ENCODE measurements at regions of chr11 and their contacts with region 1.

Region 1: GRCh38 chr11:111441443-111441842 is 62.4 kb upstream of the POU2AF1 start:
- DNase-seq: peak; percentile 42
- H3K4me3 Mint-ChIP-seq: no peak overlapping the region
- H3K27ac Mint-ChIP-seq: peak overlapping the region; percentile 46
- H3K4me1 Mint-ChIP-seq: peaks cover 15% of the 10 kb centered on the region
- H3K27me3 Mint-ChIP-seq: peaks cover 11% of the 10 kb centered on the region
- CTCF ChIP-seq: no peak

Region 2: GRCh38 chr11:110463153-110463552 is 978.3 kb before region 1 on chr11:
- CTCF ChIA-PET with region 1: no interaction called
- POLR2A ChIA-PET with region 1: no interaction called
- intact Hi-C with region 1: loop called (anchors 10 kb)
- DNase-seq: peak; percentile 52
- H3K4me3 Mint-ChIP-seq: no peak overlapping the region
- H3K27ac Mint-ChIP-seq: no peak overlapping the region
- H3K4me1 Mint-ChIP-seq: no peaks in the 10 kb centered on the region
- H3K27me3 Mint-ChIP-seq: no peaks in the 10 kb centered on the region
- CTCF ChIP-seq: peak; percentile 49

Region 3: DNA sequence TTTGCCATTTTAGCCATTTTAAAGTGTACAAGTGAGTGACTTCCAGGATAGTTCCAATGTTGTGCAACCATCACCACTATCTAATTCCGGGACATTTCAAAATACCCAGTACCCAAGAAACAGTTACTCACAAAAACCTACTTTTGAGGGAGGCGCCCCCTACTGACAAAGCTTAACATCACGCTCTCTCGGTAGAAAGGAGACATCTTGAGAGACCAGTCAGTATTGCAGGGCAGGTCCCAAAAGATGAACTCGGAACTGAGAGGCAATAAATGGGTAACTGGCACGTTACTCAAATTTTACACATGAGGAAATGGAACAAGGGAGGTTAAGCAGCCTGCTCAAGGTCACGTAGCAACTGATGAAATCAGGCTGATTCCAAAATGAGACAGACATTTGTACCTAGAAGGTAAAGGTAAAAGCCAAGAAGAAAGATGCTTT is 12.4 kb before region 1 on chr11:
- CTCF ChIA-PET with region 1: interaction called, 42 read pairs
- POLR2A ChIA-PET with region 1: interaction called, 7 read pairs
- intact Hi-C with region 1: no loop called
- DNase-seq: peak; percentile 82
- H3K4me3 Mint-ChIP-seq: no peak overlapping the region
- H3K27ac Mint-ChIP-seq: no peak overlapping the region
- H3K4me1 Mint-ChIP-seq: peaks cover 22% of the 10 kb centered on the region
- H3K27me3 Mint-ChIP-seq: no peaks in the 10 kb centered on the region
- CTCF ChIP-seq: peak; percentile 74